MCF 10A (cell line): ENCODE measurements at regions of chr6 and their contacts with region 1.

Region 1: GRCh38 chr6:134589512-134589911 is 271.6 kb upstream of the SGK1 start:
- DNase-seq: peak; percentile 99
- H3K4me3 Mint-ChIP-seq: no peak overlapping the region
- H3K27ac Mint-ChIP-seq: peak overlapping the region; percentile 95
- H3K4me1 Mint-ChIP-seq: peaks cover 36% of the 10 kb centered on the region
- H3K27me3 Mint-ChIP-seq: no peaks in the 10 kb centered on the region
- CTCF ChIP-seq: no peak

Region 2: DNA sequence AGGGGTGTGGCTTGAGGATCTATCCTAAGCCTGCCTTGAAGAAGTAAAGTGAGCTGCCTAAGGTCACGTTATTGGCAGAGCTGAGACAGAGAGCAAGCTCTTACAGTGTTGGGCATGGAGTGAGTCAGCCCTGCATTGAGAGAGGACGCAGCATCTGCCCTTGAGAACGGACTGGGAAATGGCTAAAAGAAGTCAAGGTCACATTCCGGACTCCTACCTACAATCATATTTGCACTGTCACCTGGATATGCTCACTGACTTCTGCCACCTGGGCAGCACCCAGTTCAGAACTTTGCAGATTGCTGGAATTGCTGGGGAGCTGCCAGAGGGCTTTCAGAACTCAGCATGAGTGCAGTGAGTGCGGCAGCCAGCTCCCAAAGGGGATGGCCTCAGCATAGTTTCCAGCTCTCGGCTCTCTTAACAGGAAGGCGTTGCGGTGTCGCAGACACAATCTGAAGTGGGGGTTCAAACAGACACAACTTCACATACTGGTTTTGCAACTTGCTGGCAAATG is 72.3 kb before region 1 on chr6:
- CTCF ChIA-PET with region 1: no interaction called
- POLR2A ChIA-PET with region 1: interaction called, 13 read pairs
- intact Hi-C with region 1: no loop called
- DNase-seq: peak; percentile 95
- H3K4me3 Mint-ChIP-seq: peak overlapping the region; percentile 53
- H3K27ac Mint-ChIP-seq: peak overlapping the region; percentile 73
- H3K4me1 Mint-ChIP-seq: peaks cover 41% of the 10 kb centered on the region
- H3K27me3 Mint-ChIP-seq: no peaks in the 10 kb centered on the region
- CTCF ChIP-seq: no peak

Region 3: DNA sequence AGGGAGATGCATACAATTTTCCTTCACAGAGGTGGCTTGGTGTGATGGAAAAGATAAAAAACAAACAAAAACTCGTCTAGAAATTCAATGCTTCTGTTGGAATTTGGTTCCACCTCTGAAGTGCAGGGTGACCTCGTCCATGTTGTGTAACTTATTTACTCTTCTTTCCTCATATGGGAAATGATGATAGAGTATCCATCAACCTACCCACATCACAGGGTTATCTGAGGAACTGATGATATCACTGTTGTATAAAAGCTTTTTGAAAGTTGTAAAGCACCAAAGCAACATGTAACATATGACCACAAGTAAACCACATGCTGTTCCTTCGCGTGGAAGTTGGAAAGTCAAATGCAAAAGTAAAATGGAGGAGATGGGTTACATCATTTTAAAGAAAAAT is 59.6 kb before region 1 on chr6:
- CTCF ChIA-PET with region 1: interaction called, 3 read pairs
- POLR2A ChIA-PET with region 1: interaction called, 10 read pairs
- intact Hi-C with region 1: no loop called
- DNase-seq: peak; percentile 43
- H3K4me3 Mint-ChIP-seq: no peak overlapping the region
- H3K27ac Mint-ChIP-seq: no peak overlapping the region
- H3K4me1 Mint-ChIP-seq: peaks cover 13% of the 10 kb centered on the region
- H3K27me3 Mint-ChIP-seq: no peaks in the 10 kb centered on the region
- CTCF ChIP-seq: no peak

Region 4: DNA sequence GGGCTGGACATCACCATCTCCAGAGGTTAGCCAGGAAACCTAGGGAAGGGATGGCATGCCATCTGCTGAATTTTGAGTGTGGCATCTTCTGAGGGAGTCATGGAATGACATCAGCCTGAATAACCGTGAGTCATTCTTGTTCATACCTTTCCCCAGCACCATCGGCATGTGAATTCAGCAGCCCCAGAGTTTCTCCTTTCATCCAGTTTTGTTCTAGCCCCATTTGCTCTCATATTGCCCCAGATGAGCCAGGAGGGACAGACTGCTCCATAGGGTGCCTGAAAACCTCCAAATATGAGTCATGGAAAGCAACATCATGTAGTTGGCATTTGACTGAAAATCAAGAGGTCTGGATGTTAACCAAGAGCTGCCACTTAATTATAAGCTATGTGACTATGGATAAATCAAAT is 52.4 kb before region 1 on chr6:
- CTCF ChIA-PET with region 1: interaction called, 3 read pairs
- POLR2A ChIA-PET with region 1: interaction called, 13 read pairs
- intact Hi-C with region 1: no loop called
- DNase-seq: peak; percentile 98
- H3K4me3 Mint-ChIP-seq: no peak overlapping the region
- H3K27ac Mint-ChIP-seq: peak overlapping the region; percentile 65
- H3K4me1 Mint-ChIP-seq: peaks cover 32% of the 10 kb centered on the region
- H3K27me3 Mint-ChIP-seq: no peaks in the 10 kb centered on the region
- CTCF ChIP-seq: no peak

Region 5: DNA sequence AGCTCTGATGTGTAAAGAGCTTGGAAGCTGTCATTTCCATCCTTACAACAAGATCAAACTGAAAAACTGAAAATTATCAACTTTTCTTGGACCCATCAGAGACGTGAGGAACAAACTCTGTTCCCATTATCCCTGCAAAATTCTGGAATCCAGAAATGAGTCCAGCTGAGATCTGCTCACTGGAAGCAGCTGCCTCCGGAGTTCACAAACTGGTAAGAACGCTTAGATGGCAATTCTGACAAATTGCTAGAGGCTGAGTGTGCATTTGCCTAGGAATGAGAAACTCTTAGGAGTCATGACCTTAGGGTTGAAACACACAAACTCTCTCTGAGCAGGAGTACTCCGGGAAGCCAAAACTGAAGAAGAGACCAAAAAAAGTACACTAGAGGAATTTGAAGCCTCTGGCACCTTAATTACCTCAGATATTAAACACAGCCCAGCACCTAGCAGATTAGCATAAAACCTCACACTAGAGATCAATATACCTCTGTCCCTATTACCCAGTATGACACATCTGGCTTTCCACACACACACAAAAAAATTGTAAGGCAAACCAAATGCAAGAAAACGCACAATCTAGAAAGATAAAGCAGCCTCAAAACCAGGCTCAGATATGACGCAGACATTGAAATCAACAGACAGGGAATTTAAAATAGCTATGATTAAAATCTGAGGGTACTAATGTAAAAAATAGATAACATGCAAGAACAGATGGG is 38.1 kb before region 1 on chr6:
- CTCF ChIA-PET with region 1: no interaction called
- POLR2A ChIA-PET with region 1: interaction called, 26 read pairs
- intact Hi-C with region 1: no loop called
- DNase-seq: peak; percentile 39
- H3K4me3 Mint-ChIP-seq: peak overlapping the region; percentile 10
- H3K27ac Mint-ChIP-seq: peak overlapping the region; percentile 10
- H3K4me1 Mint-ChIP-seq: peaks cover 16% of the 10 kb centered on the region
- H3K27me3 Mint-ChIP-seq: no peaks in the 10 kb centered on the region
- CTCF ChIP-seq: no peak

Region 6: DNA sequence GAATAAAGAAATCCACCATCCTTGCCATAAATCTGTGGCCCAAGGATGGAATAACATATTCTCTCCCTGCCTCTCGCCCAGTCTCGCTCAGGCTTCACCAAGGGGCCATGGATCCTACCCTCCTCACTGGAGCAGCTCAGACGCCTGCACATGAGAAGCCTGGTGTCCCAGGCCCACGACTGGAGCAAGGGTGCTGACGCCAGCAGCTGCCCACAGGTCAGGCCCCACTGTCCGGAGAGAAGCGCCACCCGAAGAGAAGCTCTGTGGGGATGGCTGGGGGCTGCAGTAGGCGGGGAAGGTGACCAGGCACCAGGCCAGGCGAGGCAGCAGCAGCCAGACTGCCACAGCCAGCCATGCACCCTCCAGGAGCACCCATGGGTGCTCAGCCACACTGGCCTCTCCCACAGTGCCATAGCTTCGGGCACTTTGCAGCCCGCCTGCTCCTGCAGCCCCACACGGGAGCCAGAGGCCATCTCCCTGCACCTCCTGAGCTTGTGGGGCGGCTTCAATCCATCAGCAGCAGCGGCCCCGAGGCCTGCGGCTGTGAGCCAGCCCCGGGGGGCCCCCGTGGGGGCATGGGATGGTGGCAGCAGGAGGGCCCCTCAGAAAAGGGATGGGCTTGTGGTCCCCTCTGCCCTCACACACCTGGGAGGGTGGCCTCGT is 14.6 kb after region 1 on chr6:
- CTCF ChIA-PET with region 1: interaction called, 3 read pairs
- POLR2A ChIA-PET with region 1: interaction called, 12 read pairs
- intact Hi-C with region 1: no loop called
- DNase-seq: no peak
- H3K4me3 Mint-ChIP-seq: no peak overlapping the region
- H3K27ac Mint-ChIP-seq: no peak overlapping the region
- H3K4me1 Mint-ChIP-seq: peaks cover 7% of the 10 kb centered on the region
- H3K27me3 Mint-ChIP-seq: no peaks in the 10 kb centered on the region
- CTCF ChIP-seq: no peak